GM12878 (cell line): ENCODE measurements at regions of chr11 and their contacts with region 1.

Region 1: DNA sequence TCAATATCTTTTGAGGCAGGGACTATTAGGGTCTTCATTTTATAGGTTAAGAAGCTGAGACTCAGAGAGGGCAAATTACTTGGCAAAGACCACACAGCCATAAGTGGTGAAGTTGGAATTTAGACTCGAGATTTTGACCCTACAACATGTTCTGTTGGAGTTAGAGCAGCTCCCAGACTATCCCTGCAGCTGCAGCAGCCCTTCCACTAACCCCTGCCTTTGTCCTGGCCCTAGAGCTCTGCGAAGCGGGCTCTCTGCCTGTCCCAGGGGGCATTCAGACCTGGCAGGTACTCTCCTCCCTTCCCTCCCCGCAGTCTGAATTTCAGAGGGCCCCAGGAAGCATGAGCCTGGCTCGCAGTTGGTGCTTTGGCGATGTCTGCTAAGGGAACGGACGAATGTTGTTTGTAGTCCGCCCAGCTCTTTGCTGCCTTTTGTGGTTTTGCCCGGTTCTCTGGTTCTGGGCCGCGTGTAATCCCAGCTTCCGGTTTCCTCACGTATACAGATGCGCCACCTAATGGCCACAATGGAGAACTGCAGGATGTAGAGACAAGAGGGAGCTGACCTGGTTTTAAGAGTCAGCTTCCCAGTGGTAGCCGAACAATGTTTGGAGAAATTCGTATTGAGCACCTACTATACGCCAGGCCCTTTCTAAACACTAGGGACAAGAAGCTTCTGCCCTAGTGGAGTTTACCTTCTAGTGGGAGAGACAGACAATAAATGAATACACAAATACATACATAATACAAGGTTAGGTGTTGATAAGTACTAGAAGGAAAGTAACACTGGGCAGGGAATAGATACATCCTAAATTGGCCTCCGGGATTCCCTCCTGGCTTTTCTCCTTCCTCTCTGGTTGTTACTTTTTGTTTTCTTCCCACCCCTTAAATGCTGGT is 125.2 kb downstream of the ST3GAL4 start:
- DNase-seq: peak; percentile 51
- ATAC-seq: peak; percentile 78
- H3K4me3 ChIP-seq: peak overlapping the region; percentile 56; the same call in 1 of the 2 replicates
- H3K27ac ChIP-seq: no peak overlapping the region
- H3K4me1 ChIP-seq: peaks cover 25% of the 10 kb centered on the region
- H3K27me3 ChIP-seq: no peaks in the 10 kb centered on the region; a peak in 1 of 4 replicates
- CTCF ChIP-seq: peak; percentile 92 to 95 (median 95)
- EP300 ChIP-seq: no peak
- POLR2A ChIP-seq: no peak
- RAD21 ChIP-seq: peak; percentile 65

Region 2: DNA sequence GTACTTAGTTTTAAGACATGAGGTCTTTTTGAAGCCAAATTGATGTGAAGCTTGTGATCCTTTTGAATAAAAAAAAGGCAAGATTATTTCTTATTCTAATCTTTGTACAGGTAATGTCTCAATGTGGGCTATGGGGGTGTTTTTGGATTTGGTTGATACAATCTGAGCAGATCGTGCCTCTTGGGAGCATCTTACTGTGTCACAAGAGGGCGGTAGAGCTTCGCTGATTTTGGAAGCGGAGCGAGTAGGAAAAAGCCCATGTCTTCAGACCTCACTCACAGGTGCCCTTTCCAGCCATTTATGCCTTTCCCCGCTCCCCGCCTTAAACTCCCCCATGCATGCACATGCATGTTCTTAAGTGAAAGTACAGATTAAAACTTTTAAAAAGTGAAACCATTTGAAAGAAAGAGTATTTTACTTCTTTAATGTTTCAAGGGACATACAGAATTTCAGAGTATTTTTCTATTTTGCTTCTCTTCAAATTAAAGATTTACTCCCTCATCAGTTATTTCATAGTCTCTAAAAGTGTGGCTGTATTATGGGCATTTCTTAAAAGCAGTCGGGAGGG is 557.6 kb before region 1 on chr11:
- CTCF ChIA-PET with region 1: interaction called, 14 read pairs
- POLR2A ChIA-PET with region 1: no interaction called
- RAD21 ChIA-PET with region 1: no interaction called
- SMC1A ChIA-PET with region 1: no interaction called
- in situ Hi-C with region 1: no loop called
- intact Hi-C with region 1: no loop called
- DNase-seq: peak; percentile 37
- ATAC-seq: peak; percentile 97
- H3K4me3 ChIP-seq: no peak overlapping the region
- H3K27ac ChIP-seq: no peak overlapping the region
- H3K4me1 ChIP-seq: no peaks in the 10 kb centered on the region
- H3K27me3 ChIP-seq: no peaks in the 10 kb centered on the region
- CTCF ChIP-seq: peak; percentile 83 to 89 (median 85)
- EP300 ChIP-seq: no peak
- POLR2A ChIP-seq: no peak
- RAD21 ChIP-seq: peak; percentile 89

Region 3: DNA sequence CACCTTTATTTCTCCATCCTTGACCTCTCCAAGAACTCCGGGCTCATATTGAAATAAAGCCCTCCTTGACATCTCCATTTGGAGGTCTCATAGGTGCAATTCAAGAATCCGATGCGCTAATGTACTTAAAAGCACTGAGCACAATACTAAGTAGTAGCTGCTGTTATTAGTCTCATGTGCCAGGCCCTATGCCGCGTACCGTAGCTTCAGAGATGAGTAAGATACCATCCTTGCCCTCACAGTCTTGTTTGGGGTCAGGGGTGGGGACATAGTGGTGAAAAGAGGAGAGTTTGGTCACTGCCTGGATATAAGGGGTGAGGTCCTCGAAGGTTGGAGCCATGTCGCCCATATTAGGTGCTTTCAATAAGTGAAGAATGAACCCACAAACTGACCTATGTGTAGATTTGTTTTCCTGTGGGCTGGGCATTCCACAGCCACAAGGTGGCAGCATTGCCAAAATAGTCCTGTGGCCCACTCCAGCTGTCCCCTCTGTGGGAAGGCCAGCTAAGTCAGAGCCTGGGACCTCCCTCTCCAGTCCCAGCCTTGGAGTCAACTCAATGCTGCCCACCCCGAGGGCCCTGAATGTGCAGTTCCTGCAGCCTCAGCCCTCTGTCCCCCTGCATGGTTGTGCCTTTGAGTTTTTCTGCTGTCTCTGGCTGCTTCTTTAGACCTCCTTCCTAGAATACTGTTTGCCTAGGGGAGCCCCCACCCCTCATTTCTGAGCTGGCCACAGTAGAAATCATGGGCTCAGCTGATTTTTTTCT is 170.2 kb before region 1 on chr11:
- CTCF ChIA-PET with region 1: interaction called, 232 read pairs
- POLR2A ChIA-PET with region 1: interaction called, 5 read pairs
- RAD21 ChIA-PET with region 1: interaction called, 36 read pairs
- SMC1A ChIA-PET with region 1: interaction called, 78 read pairs
- in situ Hi-C with region 1: no loop called
- intact Hi-C with region 1: loop called (anchors 1 kb)
- DNase-seq: no peak
- ATAC-seq: peak; percentile 74
- H3K4me3 ChIP-seq: no peak overlapping the region
- H3K27ac ChIP-seq: no peak overlapping the region
- H3K4me1 ChIP-seq: peaks cover 44% of the 10 kb centered on the region
- H3K27me3 ChIP-seq: no peaks in the 10 kb centered on the region
- CTCF ChIP-seq: peak; percentile 76 to 95 (median 89); a peak in 5 of 6 replicates
- EP300 ChIP-seq: no peak
- POLR2A ChIP-seq: no peak
- RAD21 ChIP-seq: peak; percentile 89

Region 4: GRCh38 chr11:126355324-126355925 is 125.2 kb before region 1 on chr11 and contains the start of gene ST3GAL4:
- CTCF ChIA-PET with region 1: interaction called, 11 read pairs
- POLR2A ChIA-PET with region 1: no interaction called
- RAD21 ChIA-PET with region 1: no interaction called
- SMC1A ChIA-PET with region 1: interaction called, 3 read pairs
- in situ Hi-C with region 1: no loop called
- intact Hi-C with region 1: no loop called
- DNase-seq: peak; percentile 11
- ATAC-seq: peak; percentile 79
- H3K4me3 ChIP-seq: peak within 1 kb of the TSS; percentile 73
- H3K27ac ChIP-seq: peak within 1 kb of the TSS; percentile 87
- H3K4me1 ChIP-seq: peaks cover 21% of the 10 kb centered on the region
- H3K27me3 ChIP-seq: no peaks in the 10 kb centered on the region
- CTCF ChIP-seq: no peak
- EP300 ChIP-seq: no peak
- POLR2A ChIP-seq: peak; percentile 69
- RAD21 ChIP-seq: no peak
- polyA plus RNA-seq, gene ST3GAL4: not detected

Region 5: DNA sequence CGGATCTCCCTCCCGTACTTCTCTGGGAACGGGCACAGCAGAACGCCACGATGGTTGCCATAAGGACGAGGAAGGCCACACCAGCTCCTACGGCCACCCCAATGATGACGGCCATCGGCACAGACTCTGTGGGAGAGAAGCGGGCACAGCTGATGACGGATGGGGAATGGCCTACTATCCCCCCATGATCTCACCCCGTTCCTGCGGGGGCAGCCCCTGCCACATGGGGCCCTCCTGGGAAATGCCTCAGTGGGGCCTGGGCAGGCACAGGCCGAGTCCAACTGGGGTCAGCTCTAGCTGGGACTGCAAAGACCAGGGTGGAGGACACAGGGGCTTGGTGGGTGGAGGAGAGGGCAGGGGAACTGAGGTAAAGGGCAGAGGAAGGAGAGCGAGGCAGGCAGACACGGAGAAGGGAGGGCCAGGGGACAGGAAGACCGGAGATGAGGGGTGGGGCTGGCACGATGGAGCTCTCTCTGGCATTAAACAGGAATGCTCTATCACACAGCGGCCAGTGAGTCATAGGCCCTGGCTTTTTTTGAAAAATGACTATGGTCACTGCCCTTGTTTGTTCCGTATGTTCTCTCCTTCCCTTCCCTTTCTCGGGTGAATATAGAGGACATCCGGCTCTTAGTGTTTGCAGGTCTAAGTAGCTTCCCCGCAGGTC is 49.1 kb before region 1 on chr11:
- CTCF ChIA-PET with region 1: interaction called, 23 read pairs
- POLR2A ChIA-PET with region 1: interaction called, 3 read pairs
- RAD21 ChIA-PET with region 1: interaction called, 4 read pairs
- SMC1A ChIA-PET with region 1: interaction called, 3 read pairs
- in situ Hi-C with region 1: no loop called
- intact Hi-C with region 1: no loop called
- DNase-seq: no peak
- ATAC-seq: no peak
- H3K4me3 ChIP-seq: no peak overlapping the region
- H3K27ac ChIP-seq: no peak overlapping the region
- H3K4me1 ChIP-seq: peaks cover 9% of the 10 kb centered on the region; the same call in 1 of the 2 replicates
- H3K27me3 ChIP-seq: no peaks in the 10 kb centered on the region; a peak in 1 of 4 replicates
- CTCF ChIP-seq: no peak
- EP300 ChIP-seq: no peak
- POLR2A ChIP-seq: no peak
- RAD21 ChIP-seq: no peak

Region 6: DNA sequence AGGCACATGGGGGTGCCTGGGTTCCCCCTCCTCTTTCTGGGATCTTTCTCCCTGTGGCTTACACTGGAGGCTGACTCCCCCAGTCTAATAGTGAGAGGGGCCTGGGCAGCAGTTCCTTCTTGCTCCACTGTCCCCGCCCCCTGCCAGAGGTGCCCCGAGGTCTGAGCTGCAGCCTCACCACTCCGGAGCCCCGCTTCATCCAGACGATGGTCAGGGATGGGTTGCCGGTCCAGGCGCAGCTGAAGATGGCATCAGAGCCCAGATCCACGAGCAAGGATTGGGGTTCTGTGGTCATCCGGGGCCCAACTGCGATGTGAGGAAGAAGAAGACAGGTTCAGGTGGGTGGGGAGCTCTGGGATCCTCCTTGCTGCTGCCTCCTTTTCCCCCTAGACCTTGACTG is 34.1 kb before region 1 on chr11:
- CTCF ChIA-PET with region 1: interaction called, 125 read pairs
- POLR2A ChIA-PET with region 1: no interaction called
- RAD21 ChIA-PET with region 1: interaction called, 33 read pairs
- SMC1A ChIA-PET with region 1: interaction called, 79 read pairs
- in situ Hi-C with region 1: no loop called
- intact Hi-C with region 1: loop called (anchors 1 kb)
- DNase-seq: no peak
- ATAC-seq: no peak
- H3K4me3 ChIP-seq: no peak overlapping the region
- H3K27ac ChIP-seq: no peak overlapping the region
- H3K4me1 ChIP-seq: no peaks in the 10 kb centered on the region
- H3K27me3 ChIP-seq: no peaks in the 10 kb centered on the region; a peak in 1 of 4 replicates
- CTCF ChIP-seq: no peak
- EP300 ChIP-seq: no peak
- POLR2A ChIP-seq: no peak
- RAD21 ChIP-seq: no peak

Region 7: GRCh38 chr11:126465573-126466188 is 15.0 kb before region 1 on chr11:
- CTCF ChIA-PET with region 1: interaction called, 76 read pairs
- POLR2A ChIA-PET with region 1: no interaction called
- RAD21 ChIA-PET with region 1: interaction called, 7 read pairs
- SMC1A ChIA-PET with region 1: interaction called, 6 read pairs
- in situ Hi-C with region 1: no loop called
- intact Hi-C with region 1: no loop called
- DNase-seq: peak; percentile 53
- ATAC-seq: peak; percentile 86
- H3K4me3 ChIP-seq: no peak overlapping the region
- H3K27ac ChIP-seq: no peak overlapping the region
- H3K4me1 ChIP-seq: peaks cover 20% of the 10 kb centered on the region
- H3K27me3 ChIP-seq: no peaks in the 10 kb centered on the region; a peak in 2 of 4 replicates
- CTCF ChIP-seq: no peak
- EP300 ChIP-seq: no peak
- POLR2A ChIP-seq: no peak
- RAD21 ChIP-seq: no peak